ENCODE measurements at regions of chr10 and their contacts with region 1.

Region 1: GRCh38 chr10:11986593-11987216 is 55.9 kb downstream of the UPF2 start:
- DNase-seq: peak; percentile 72
- H3K4me3 ChIP-seq: no peak overlapping the region; a peak in 1 of 4 replicates
- H3K27ac ChIP-seq: no peak overlapping the region
- H3K4me1 ChIP-seq: no peaks in the 10 kb centered on the region
- H3K27me3 ChIP-seq: no peaks in the 10 kb centered on the region
- CTCF ChIP-seq: peak; percentile 96
- EP300 ChIP-seq: no peak
- RAD21 ChIP-seq: peak; percentile 91

Region 2: DNA sequence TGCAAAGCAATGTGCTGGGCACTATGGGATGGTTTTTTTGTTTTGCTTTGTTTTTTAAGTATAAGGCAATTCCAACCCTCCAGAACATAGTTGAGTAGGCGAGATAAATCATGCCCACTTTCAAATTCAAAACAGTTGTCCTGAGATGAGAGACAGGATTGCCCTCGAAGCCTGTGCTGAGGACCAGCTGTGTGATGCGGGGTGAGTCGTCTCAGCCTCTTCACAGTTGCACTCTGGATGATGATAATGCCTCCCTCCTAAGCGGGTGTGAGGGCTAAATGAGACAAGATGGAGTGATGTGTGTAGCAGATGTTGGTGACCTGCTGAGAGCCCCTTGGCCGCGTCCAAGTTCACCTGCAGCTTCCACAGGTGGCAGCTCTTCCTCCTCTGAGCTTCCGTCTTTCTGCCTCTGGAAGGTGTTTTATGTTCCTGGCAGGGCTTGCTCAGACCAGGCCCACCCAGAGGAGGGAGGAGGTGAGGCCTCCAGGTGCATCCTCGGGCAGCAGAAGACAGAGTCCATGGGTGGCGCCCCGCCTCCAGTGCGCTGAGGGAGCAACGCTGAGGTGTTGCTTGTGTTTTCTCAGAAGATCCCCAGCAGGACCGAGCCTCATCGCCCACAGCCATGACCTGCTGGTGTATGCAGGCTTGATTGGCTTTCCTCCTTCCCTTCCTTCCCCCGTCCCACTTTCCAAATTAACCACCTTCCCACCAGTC is 214.0 kb before region 1 on chr10:
- CTCF ChIA-PET with region 1: interaction called, 12 read pairs
- POLR2A ChIA-PET with region 1: no interaction called
- DNase-seq: no peak
- H3K4me3 ChIP-seq: no peak overlapping the region
- H3K27ac ChIP-seq: no peak overlapping the region
- H3K4me1 ChIP-seq: no peaks in the 10 kb centered on the region
- H3K27me3 ChIP-seq: no peaks in the 10 kb centered on the region
- CTCF ChIP-seq: no peak
- EP300 ChIP-seq: no peak
- RAD21 ChIP-seq: no peak

Region 3: GRCh38 chr10:11782793-11783557 is 203.7 kb before region 1 on chr10:
- CTCF ChIA-PET with region 1: interaction called, 57 read pairs
- POLR2A ChIA-PET with region 1: no interaction called
- DNase-seq: peak; percentile 61
- H3K4me3 ChIP-seq: no peak overlapping the region
- H3K27ac ChIP-seq: no peak overlapping the region
- H3K4me1 ChIP-seq: no peaks in the 10 kb centered on the region
- H3K27me3 ChIP-seq: no peaks in the 10 kb centered on the region
- CTCF ChIP-seq: peak; percentile 78
- EP300 ChIP-seq: no peak
- RAD21 ChIP-seq: peak; percentile 73

Region 4: DNA sequence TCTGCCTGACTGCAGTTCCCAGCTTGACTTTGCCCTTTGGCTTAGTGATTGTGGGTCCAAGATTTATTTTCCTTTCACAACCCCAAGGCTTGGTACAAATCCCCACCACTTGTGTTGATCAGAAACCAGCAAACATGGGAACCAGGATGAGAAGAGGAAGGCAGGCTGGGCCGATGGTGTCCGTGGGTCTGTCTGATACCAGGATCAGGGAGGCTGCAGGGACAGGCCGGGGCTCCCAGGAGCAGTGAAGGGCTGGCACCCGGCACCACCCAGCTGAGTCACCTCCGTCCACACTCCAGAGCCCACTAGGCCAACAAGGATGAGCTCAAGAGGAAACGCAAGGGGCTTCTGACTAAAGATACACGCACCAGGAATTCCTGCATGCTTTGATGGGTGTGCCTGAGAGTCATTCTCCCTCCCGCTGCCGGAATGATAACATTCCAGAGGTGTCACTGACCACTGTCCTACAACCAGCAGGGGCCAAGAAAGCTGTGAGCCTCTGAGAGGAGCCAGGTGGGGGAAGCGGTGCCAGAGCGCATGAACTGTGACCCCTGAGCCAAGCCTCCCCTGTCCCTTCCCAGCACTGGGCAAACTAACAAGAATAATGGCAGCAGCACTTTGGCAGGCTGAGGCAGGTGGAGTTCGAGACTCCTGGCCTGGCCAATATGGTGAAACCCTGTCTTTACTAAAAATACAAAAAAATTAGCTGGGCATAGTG is 192.8 kb before region 1 on chr10:
- CTCF ChIA-PET with region 1: interaction called, 28 read pairs
- POLR2A ChIA-PET with region 1: no interaction called
- DNase-seq: no peak
- H3K4me3 ChIP-seq: no peak overlapping the region
- H3K27ac ChIP-seq: peak overlapping the region in 1 of 2 experiments; percentile 33; a peak in 1 of 4 replicates
- H3K4me1 ChIP-seq: peaks cover 0 to 8% of the 10 kb centered on the region in 2 experiments; a peak in 1 of 4 replicates
- H3K27me3 ChIP-seq: no peaks in the 10 kb centered on the region
- CTCF ChIP-seq: no peak
- EP300 ChIP-seq: no peak
- RAD21 ChIP-seq: no peak

Region 5: GRCh38 chr10:11949152-11949551 is 37.6 kb before region 1 on chr10:
- CTCF ChIA-PET with region 1: interaction called, 11 read pairs
- POLR2A ChIA-PET with region 1: no interaction called
- DNase-seq: no peak
- H3K4me3 ChIP-seq: no peak overlapping the region
- H3K27ac ChIP-seq: no peak overlapping the region
- H3K4me1 ChIP-seq: no peaks in the 10 kb centered on the region
- H3K27me3 ChIP-seq: no peaks in the 10 kb centered on the region
- CTCF ChIP-seq: no peak
- EP300 ChIP-seq: no peak
- RAD21 ChIP-seq: no peak

Region 6: GRCh38 chr10:11975795-11976194 is 10.9 kb before region 1 on chr10:
- CTCF ChIA-PET with region 1: interaction called, 15 read pairs
- POLR2A ChIA-PET with region 1: no interaction called
- DNase-seq: no peak
- H3K4me3 ChIP-seq: no peak overlapping the region
- H3K27ac ChIP-seq: no peak overlapping the region
- H3K4me1 ChIP-seq: no peaks in the 10 kb centered on the region
- H3K27me3 ChIP-seq: no peaks in the 10 kb centered on the region
- CTCF ChIP-seq: no peak
- EP300 ChIP-seq: no peak
- RAD21 ChIP-seq: no peak

Region 7: GRCh38 chr10:12186323-12186722 is 199.6 kb after region 1 on chr10:
- CTCF ChIA-PET with region 1: no interaction called
- POLR2A ChIA-PET with region 1: no interaction called
- DNase-seq: no peak
- H3K4me3 ChIP-seq: no peak overlapping the region
- H3K27ac ChIP-seq: no peak overlapping the region
- H3K4me1 ChIP-seq: no peaks in the 10 kb centered on the region
- H3K27me3 ChIP-seq: no peaks in the 10 kb centered on the region
- CTCF ChIP-seq: no peak
- EP300 ChIP-seq: no peak
- RAD21 ChIP-seq: no peak

Measured in SK-N-SH (cell line).